GM12878 (cell line): ENCODE measurements at regions of chr13 and their contacts with region 1.

Region 1: GRCh38 chr13:91381371-91381770 is 17.1 kb upstream of the GPC5 start:
- DNase-seq: no peak
- ATAC-seq: peak; percentile 42; the same call in 1 of the 3 replicates
- H3K4me3 ChIP-seq: no peak overlapping the region
- H3K27ac ChIP-seq: no peak overlapping the region
- H3K4me1 ChIP-seq: no peaks in the 10 kb centered on the region
- H3K27me3 ChIP-seq: no peaks in the 10 kb centered on the region
- CTCF ChIP-seq: peak; percentile 34 to 53 (median 52); a peak in 5 of 6 replicates
- EP300 ChIP-seq: no peak
- POLR2A ChIP-seq: no peak
- RAD21 ChIP-seq: peak; percentile 62

Region 2: DNA sequence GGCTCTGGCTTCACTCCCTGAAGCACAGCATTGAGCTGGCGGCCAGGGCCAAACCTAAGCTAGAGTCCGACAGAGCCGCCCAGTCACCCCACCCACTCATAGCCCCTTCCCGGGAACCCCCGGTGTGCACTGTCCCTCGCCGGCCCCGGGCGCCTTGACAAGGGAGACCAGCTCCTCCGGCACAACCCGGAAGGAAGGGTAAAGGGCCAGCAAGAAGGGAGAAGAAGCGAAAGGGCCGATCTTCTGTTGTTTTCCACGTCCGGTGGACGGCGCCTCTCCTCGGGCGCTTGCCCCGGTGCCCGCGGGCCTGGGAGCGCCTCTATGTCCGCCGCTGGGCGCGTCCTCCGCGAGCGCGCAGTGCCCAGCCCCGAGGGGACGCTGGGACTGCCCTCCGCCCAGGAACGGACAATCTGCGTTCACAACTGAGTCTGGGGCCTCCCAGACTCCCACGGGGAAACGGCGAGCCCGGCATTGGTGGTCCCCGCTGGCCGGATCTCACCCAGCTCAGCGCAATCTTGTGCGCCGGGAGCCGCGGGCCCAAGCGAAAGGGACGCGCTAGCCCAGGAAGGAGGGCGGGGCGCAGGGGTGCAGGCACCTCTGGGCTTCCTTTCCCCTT is 206.4 kb before region 1 on chr13:
- CTCF ChIA-PET with region 1: no interaction called
- POLR2A ChIA-PET with region 1: no interaction called
- RAD21 ChIA-PET with region 1: no interaction called
- SMC1A ChIA-PET with region 1: no interaction called
- in situ Hi-C with region 1: no loop called
- intact Hi-C with region 1: no loop called
- DNase-seq: no peak
- ATAC-seq: no peak
- H3K4me3 ChIP-seq: no peak overlapping the region
- H3K27ac ChIP-seq: no peak overlapping the region
- H3K4me1 ChIP-seq: no peaks in the 10 kb centered on the region
- H3K27me3 ChIP-seq: no peaks in the 10 kb centered on the region
- CTCF ChIP-seq: no peak
- EP300 ChIP-seq: no peak
- POLR2A ChIP-seq: no peak
- RAD21 ChIP-seq: no peak

Region 3: GRCh38 chr13:91291078-91291477 is 90.3 kb before region 1 on chr13:
- CTCF ChIA-PET with region 1: no interaction called
- POLR2A ChIA-PET with region 1: no interaction called
- RAD21 ChIA-PET with region 1: no interaction called
- SMC1A ChIA-PET with region 1: no interaction called
- in situ Hi-C with region 1: no loop called
- intact Hi-C with region 1: no loop called
- DNase-seq: no peak
- ATAC-seq: peak; percentile 52; the same call in 2 of the 3 replicates
- H3K4me3 ChIP-seq: no peak overlapping the region
- H3K27ac ChIP-seq: no peak overlapping the region
- H3K4me1 ChIP-seq: no peaks in the 10 kb centered on the region
- H3K27me3 ChIP-seq: no peaks in the 10 kb centered on the region
- CTCF ChIP-seq: peak in 1 of 3 experiments; percentile 15; a peak in 1 of 6 replicates
- EP300 ChIP-seq: no peak
- POLR2A ChIP-seq: no peak
- RAD21 ChIP-seq: no peak

Region 4: GRCh38 chr13:91426913-91427312 is 45.5 kb after region 1 on chr13:
- CTCF ChIA-PET with region 1: no interaction called
- POLR2A ChIA-PET with region 1: no interaction called
- RAD21 ChIA-PET with region 1: no interaction called
- SMC1A ChIA-PET with region 1: no interaction called
- in situ Hi-C with region 1: no loop called
- intact Hi-C with region 1: no loop called
- DNase-seq: no peak
- ATAC-seq: no peak
- H3K4me3 ChIP-seq: no peak overlapping the region
- H3K27ac ChIP-seq: no peak overlapping the region
- H3K4me1 ChIP-seq: no peaks in the 10 kb centered on the region
- H3K27me3 ChIP-seq: no peaks in the 10 kb centered on the region
- CTCF ChIP-seq: no peak
- EP300 ChIP-seq: no peak
- POLR2A ChIP-seq: no peak
- RAD21 ChIP-seq: no peak

Region 5: GRCh38 chr13:91576590-91576989 is 195.2 kb after region 1 on chr13:
- CTCF ChIA-PET with region 1: interaction called, 12 read pairs
- POLR2A ChIA-PET with region 1: no interaction called
- RAD21 ChIA-PET with region 1: no interaction called
- SMC1A ChIA-PET with region 1: no interaction called
- in situ Hi-C with region 1: no loop called
- intact Hi-C with region 1: loop called (anchors 5 kb)
- DNase-seq: no peak
- ATAC-seq: peak; percentile 48
- H3K4me3 ChIP-seq: no peak overlapping the region
- H3K27ac ChIP-seq: no peak overlapping the region
- H3K4me1 ChIP-seq: no peaks in the 10 kb centered on the region
- H3K27me3 ChIP-seq: no peaks in the 10 kb centered on the region
- CTCF ChIP-seq: peak; percentile 20 to 39 (median 31); a peak in 2 of 6 replicates
- EP300 ChIP-seq: no peak
- POLR2A ChIP-seq: no peak
- RAD21 ChIP-seq: 0 out of 2 replicates have a peak, but pooled peaks have one; percentile 9

Region 6: DNA sequence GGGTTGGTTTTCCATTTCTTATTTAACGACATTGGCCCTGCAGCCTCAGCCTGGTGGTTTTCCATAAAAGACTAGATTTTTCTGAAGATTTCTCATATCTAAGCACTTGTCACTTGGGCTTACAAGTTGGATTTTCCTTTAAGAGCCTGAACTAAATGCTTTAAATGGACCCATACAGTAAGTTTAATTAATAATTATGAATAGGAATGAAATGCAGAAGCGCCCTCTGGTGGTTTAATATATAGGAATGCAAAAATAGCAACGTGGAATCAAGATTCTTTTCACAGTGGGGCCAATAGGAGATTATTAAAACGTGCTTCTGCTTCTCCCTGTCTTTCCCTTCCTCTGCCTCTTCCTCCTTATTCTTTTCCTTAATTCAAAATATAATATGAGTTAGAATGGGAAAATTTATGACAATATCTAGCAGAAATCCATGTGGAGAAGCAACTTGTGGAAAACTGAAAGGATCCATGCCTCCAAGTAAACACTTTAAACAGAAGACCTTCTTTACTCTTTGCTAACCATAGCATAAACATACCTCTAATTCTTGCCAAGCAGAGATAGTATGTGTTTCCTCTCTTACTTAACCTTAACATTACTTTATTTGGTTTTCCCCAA is 341.0 kb after region 1 on chr13:
- CTCF ChIA-PET with region 1: interaction called, 11 read pairs
- POLR2A ChIA-PET with region 1: no interaction called
- RAD21 ChIA-PET with region 1: no interaction called
- SMC1A ChIA-PET with region 1: interaction called, 6 read pairs
- in situ Hi-C with region 1: loop called (anchors 5 kb)
- intact Hi-C with region 1: no loop called
- DNase-seq: no peak
- ATAC-seq: no peak
- H3K4me3 ChIP-seq: no peak overlapping the region
- H3K27ac ChIP-seq: no peak overlapping the region
- H3K4me1 ChIP-seq: no peaks in the 10 kb centered on the region
- H3K27me3 ChIP-seq: peaks cover 0 to 3% of the 10 kb centered on the region in 2 experiments; a peak in 1 of 4 replicates
- CTCF ChIP-seq: peak; percentile 33 to 50 (median 42); a peak in 4 of 6 replicates
- EP300 ChIP-seq: no peak
- POLR2A ChIP-seq: no peak
- RAD21 ChIP-seq: peak; percentile 45